MCF 10A (cell line): ENCODE measurements at regions of chr7 and their contacts with region 1.

Region 1: DNA sequence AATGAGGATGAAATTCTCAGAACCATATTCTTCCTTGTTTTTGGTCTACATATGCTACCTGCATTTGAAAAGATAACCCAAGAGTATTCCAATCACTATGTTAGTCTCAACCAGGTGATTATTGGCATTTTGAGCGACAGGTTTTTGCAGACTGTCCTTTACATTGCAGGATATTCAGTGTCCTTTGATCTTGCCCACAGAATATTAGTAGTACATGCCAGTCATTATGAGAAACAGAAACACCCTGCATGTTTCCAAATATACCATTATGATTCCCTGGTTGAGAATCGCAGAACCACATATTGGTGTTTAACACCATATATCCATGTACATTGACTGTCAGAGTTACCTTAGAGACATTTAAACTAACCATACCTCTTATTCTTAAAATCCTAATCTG is 30.6 kb downstream of the TMEM243 start:
- DNase-seq: no peak
- H3K4me3 Mint-ChIP-seq: no peak overlapping the region
- H3K27ac Mint-ChIP-seq: no peak overlapping the region
- H3K4me1 Mint-ChIP-seq: no peaks in the 10 kb centered on the region
- H3K27me3 Mint-ChIP-seq: no peaks in the 10 kb centered on the region
- CTCF ChIP-seq: no peak

Region 2: DNA sequence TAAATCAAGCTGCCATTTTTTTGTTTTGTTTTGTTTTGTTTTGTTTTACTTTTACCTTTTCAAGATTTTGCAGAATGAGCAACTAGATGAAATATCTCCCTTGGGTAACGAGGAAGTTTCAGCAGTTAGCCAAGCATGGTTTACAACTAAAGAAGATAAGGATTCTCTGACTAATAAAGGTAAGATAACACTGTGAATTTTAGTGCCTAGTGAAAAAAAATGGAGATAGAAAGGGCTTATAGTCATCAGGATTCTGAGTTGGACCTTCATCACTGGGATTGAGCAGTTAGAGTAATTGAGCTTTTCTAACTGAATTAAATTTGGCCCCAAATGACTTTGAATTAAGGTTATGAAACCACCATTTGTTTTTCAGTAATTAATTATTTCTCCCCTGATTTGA is 15.5 kb before region 1 on chr7:
- CTCF ChIA-PET with region 1: interaction called, 10 read pairs
- POLR2A ChIA-PET with region 1: interaction called, 22 read pairs
- intact Hi-C with region 1: no loop called
- DNase-seq: no peak
- H3K4me3 Mint-ChIP-seq: no peak overlapping the region
- H3K27ac Mint-ChIP-seq: no peak overlapping the region
- H3K4me1 Mint-ChIP-seq: peaks cover 16% of the 10 kb centered on the region
- H3K27me3 Mint-ChIP-seq: no peaks in the 10 kb centered on the region
- CTCF ChIP-seq: no peak